Natural killer cell (primary cell): ENCODE measurements at regions of chr12 and their contacts with region 1.

Region 1: GRCh38 chr12:14257734-14258574 is 107.5 kb upstream of the ATF7IP start:
- DNase-seq: peak; percentile 83 to 89
- ATAC-seq: peak; percentile 62 to 79 (median 75)
- H3K4me3 ChIP-seq: no peak overlapping the region
- H3K4me3 Mint-ChIP-seq: peak overlapping the region; percentile 87
- H3K27ac ChIP-seq: peak overlapping the region; percentile 93
- H3K27ac Mint-ChIP-seq: peak overlapping the region; percentile 95 to 96
- H3K4me1 ChIP-seq: peaks cover 39% of the 10 kb centered on the region
- H3K4me1 Mint-ChIP-seq: peaks cover 46 to 50% of the 10 kb centered on the region in 2 donors
- H3K27me3 ChIP-seq: no peaks in the 10 kb centered on the region
- H3K27me3 Mint-ChIP-seq: no peaks in the 10 kb centered on the region
- CTCF ChIP-seq: no peak

Region 2: GRCh38 chr12:14284184-14284722 is 26.3 kb after region 1 on chr12:
- intact Hi-C with region 1: loop called (anchors 1 kb)
- DNase-seq: peak in 1 of 2 donors; percentile 17
- ATAC-seq: peak; percentile 56 to 95 (median 85)
- H3K4me3 ChIP-seq: no peak overlapping the region
- H3K4me3 Mint-ChIP-seq: peak overlapping the region; percentile 72
- H3K27ac ChIP-seq: peak overlapping the region; percentile 86
- H3K27ac Mint-ChIP-seq: peak overlapping the region; percentile 88 to 89
- H3K4me1 ChIP-seq: peaks cover 6% of the 10 kb centered on the region
- H3K4me1 Mint-ChIP-seq: peaks cover 16 to 18% of the 10 kb centered on the region in 2 donors
- H3K27me3 ChIP-seq: no peaks in the 10 kb centered on the region
- H3K27me3 Mint-ChIP-seq: no peaks in the 10 kb centered on the region
- CTCF ChIP-seq: no peak

Region 3: DNA sequence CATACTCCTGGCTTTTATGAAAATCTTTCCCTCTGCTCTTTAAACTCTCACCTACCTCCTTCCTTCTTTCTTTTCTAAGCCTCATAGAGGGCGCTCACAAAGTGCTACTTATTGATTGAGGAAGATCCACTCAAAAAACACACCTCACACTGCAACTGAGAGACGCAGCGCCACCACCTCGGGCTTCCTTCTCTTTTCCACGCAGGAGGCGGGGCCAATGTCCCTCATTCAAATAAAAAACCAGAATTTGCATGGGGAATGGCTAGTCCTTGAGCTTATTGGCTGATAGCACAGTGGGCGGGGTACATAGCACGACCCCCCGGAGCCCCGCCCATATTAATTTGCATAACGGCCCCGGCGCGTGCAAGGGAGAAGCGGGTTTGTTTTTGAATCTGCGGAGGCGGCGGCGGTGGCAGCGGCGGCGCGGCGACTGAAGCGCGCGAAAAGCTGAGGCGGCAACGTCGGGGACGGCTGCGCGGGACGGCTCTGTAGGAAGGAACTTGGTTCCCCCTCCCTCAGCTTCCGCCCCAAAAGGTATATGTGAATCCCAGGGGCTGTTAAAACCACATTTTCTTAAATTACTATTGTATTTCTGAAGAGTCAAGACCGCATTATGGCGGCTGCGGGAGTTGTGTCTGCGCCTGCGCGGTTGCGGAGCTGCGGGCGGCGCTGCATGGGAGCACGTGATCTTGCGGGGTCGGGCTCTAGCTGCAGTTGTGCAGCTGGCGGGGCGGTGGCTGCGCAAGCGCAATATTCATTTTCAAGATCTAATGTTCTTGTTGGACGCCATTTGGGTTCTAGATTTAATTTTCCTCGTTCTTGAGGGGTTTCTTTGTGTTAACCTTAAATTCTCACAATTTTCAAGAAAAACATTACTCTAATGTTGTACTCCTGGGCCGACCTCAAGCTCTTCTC is 107.6 kb after region 1 on chr12 and contains the start of gene ATF7IP:
- intact Hi-C with region 1: loop called (anchors 1 kb)
- DNase-seq: peak; percentile 97 to 98
- ATAC-seq: peak; percentile 86 to 96 (median 88)
- H3K4me3 ChIP-seq: peak within 1 kb of the TSS; percentile 89
- H3K4me3 Mint-ChIP-seq: peak within 1 kb of the TSS; percentile 97
- H3K27ac ChIP-seq: peak within 1 kb of the TSS; percentile 97
- H3K27ac Mint-ChIP-seq: peak within 1 kb of the TSS; percentile 89 to 100
- H3K4me1 ChIP-seq: peaks cover 17% of the 10 kb centered on the region
- H3K4me1 Mint-ChIP-seq: peaks cover 31 to 43% of the 10 kb centered on the region in 2 donors
- H3K27me3 ChIP-seq: no peaks in the 10 kb centered on the region
- H3K27me3 Mint-ChIP-seq: no peaks in the 10 kb centered on the region
- CTCF ChIP-seq: no peak
- total RNA-seq, gene ATF7IP: 161 to 180 (median 173) TPM

Region 4: DNA sequence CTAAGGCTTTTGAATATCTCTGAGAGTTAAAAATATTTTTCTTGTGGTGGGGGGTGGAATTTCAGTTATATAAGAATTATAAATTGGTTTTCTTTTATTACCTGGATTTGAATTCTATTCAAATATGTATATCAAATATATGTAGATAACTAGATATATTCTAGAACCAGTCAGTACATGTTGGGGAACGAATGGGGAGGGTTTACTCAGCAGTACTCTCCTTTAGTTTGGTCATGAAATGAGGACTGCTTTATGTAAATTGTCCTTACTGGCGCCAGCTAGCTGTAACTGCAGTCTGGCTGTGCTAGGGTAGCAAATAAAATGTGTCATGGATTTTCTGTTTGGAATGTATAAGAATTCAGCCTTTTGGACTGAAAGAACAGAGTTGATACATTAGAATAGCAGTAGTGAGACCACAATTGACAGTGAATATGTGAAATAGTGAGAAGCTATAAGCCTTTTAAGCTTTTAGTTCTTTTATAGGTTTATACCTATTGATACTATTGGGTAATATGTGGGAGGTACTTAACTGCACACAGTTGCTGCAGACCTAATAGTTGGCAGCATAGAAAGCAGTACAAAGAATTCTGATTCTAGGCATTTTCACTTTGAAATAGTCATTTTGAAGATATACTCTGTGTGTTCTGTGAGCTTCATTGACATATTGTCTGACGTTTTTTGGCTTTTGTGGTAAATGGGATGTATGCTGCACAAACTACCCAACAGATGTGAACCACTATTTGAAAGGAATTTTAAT is 136.5 kb after region 1 on chr12:
- intact Hi-C with region 1: loop called (anchors 1 kb)
- DNase-seq: peak in 1 of 2 donors; percentile 83
- ATAC-seq: peak; percentile 55 to 73 (median 63)
- H3K4me3 ChIP-seq: peak overlapping the region; percentile 9
- H3K4me3 Mint-ChIP-seq: peak overlapping the region; percentile 92
- H3K27ac ChIP-seq: peak overlapping the region; percentile 85
- H3K27ac Mint-ChIP-seq: peak overlapping the region; percentile 85 to 93
- H3K4me1 ChIP-seq: peaks cover 25% of the 10 kb centered on the region
- H3K4me1 Mint-ChIP-seq: peaks cover 54 to 80% of the 10 kb centered on the region in 2 donors
- H3K27me3 ChIP-seq: no peaks in the 10 kb centered on the region
- H3K27me3 Mint-ChIP-seq: no peaks in the 10 kb centered on the region
- CTCF ChIP-seq: no peak

Region 5: DNA sequence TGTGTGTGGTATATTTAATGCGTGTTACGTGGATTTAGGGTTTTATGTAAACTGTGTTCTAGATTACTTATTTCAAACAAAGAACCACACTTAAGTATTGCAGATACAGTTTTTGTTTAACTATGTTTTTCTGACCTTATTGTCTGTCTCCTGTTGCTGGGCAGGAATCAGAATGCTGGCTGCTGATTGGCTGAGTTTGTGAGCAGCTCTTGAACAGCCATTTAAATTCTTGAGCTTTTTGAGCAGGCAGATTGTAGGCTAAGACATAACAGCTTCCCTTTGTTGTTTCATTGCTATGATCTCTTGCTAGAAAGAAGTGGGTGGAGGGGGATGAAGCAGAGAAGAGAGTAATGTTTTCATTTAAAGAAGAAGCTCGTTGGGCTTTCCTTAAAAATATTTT is 159.8 kb after region 1 on chr12:
- intact Hi-C with region 1: loop called (anchors 1 kb)
- DNase-seq: peak; percentile 59 to 89
- ATAC-seq: peak; percentile 49 to 66 (median 63)
- H3K4me3 ChIP-seq: no peak overlapping the region
- H3K4me3 Mint-ChIP-seq: peak overlapping the region; percentile 86
- H3K27ac ChIP-seq: peak overlapping the region; percentile 42
- H3K27ac Mint-ChIP-seq: peak overlapping the region; percentile 89 to 90
- H3K4me1 ChIP-seq: peaks cover 14% of the 10 kb centered on the region
- H3K4me1 Mint-ChIP-seq: peaks cover 56 to 59% of the 10 kb centered on the region in 2 donors
- H3K27me3 ChIP-seq: no peaks in the 10 kb centered on the region
- H3K27me3 Mint-ChIP-seq: no peaks in the 10 kb centered on the region
- CTCF ChIP-seq: no peak

Region 6: DNA sequence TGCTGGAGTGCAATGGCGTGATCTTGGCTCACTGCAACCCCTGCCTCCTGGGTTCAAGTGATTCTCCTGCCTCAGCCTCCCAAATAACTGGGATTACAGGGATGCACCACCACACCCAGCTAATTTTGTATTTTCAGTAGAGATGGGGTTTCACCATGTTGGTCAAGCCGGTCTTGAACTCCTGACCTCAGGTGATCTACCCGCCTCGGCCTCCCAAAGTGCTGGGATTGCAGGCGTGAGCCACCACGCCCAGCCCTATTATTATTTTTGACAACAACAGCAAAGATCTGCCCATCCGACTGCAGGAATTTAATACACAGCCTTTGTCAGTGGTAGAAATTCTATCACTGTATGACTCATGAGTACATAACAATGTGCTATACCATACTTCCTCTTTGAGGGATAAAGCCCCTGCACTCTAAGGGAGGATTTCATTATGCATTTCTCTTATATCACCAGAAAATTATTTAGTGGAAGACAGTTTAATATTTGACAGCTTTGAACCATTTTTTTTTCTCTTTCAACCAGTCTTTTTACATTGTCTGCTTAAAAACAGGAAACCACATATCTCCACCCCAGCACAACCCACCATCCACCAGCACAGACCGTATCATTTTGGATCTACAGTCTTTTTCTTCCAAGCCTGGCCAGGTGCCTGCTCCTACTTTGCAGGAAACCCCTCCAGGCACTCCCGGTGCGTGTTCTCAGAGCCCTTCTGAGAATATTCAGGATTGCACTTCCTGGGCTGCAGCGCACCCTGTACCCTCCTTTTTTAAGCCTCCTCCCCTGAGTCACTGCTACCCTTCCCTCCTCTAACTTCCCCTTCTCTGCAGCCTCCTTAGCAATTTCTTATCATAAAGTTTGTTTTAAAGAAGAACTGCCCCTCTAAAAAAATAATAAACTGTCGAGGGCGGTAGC is 702.9 kb after region 1 on chr12:
- intact Hi-C with region 1: loop called (anchors 5 kb)
- DNase-seq: peak; percentile 38 to 75
- ATAC-seq: peak; percentile 56 to 76 (median 60)
- H3K4me3 ChIP-seq: peak overlapping the region; percentile 91
- H3K4me3 Mint-ChIP-seq: peak overlapping the region; percentile 100
- H3K27ac ChIP-seq: peak overlapping the region; percentile 95
- H3K27ac Mint-ChIP-seq: peak overlapping the region; percentile 97 to 98
- H3K4me1 ChIP-seq: peaks cover 41% of the 10 kb centered on the region
- H3K4me1 Mint-ChIP-seq: peaks cover 75 to 76% of the 10 kb centered on the region in 2 donors
- H3K27me3 ChIP-seq: no peaks in the 10 kb centered on the region
- H3K27me3 Mint-ChIP-seq: no peaks in the 10 kb centered on the region
- CTCF ChIP-seq: no peak

Region 7: DNA sequence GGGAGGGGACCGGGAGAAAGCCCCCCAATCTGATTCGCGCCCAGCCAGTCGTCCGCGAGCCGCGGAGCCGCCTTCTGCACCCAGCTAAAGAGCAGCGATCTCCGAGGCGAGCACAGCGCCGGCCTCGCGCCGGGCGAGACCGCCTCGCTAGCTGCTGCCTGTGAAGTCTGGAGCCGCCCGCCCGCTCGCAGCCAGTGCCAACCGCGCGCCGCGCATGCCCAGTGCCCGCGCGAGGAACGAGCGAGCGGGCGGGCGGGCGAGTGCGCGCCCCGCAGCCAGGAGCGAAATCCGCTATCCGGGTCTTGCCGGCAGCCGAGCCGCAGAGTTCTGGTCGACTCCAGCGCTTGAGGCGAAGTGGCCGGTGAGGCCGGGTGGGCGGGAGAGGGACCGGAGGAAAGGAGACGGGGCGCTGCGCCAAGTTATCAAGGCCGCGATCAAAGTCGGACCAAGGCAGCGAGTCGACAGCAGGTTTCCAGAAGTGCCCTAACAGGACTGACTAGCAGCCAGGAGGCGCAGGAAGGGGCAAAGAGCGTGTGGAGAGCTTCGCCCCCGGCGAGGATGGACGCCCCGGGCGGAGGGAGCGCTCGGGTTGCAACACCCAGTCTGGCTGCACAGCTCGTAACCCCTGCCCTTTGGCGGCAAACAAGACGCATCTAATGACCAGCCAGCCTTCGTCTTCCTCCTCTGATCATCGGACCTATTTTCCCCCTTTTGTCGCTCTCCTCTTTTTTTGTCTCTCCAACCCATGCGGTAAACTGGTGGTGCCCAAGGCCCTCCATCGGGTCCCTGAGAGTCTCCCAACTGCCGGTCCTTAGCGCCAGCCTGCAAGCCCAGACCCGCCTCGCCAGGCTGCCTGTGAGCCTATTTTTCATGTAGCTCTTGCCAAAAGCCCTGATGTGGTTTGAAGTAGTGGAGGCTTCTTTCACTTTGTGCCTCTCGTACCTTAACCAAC is 1531.5 kb after region 1 on chr12 and contains the start of gene EPS8:
- intact Hi-C with region 1: loop called (anchors 5 kb)
- DNase-seq: peak; percentile 88 to 93
- ATAC-seq: peak; percentile 91 to 95 (median 95)
- H3K4me3 ChIP-seq: peak within 1 kb of the TSS; percentile 60
- H3K4me3 Mint-ChIP-seq: peak within 1 kb of the TSS; percentile 99
- H3K27ac ChIP-seq: peak within 1 kb of the TSS; percentile 63
- H3K27ac Mint-ChIP-seq: peak within 1 kb of the TSS; percentile 81 to 83
- H3K4me1 ChIP-seq: peaks cover 18% of the 10 kb centered on the region
- H3K4me1 Mint-ChIP-seq: peaks cover 19% of the 10 kb centered on the region in 2 donors
- H3K27me3 ChIP-seq: peaks cover 41% of the 10 kb centered on the region
- H3K27me3 Mint-ChIP-seq: peaks cover 47 to 65% of the 10 kb centered on the region in 2 donors
- CTCF ChIP-seq: no peak
- total RNA-seq, gene EPS8: 1.5 to 2.6 (median 1.5) TPM